PC-3 (cell line): ENCODE measurements at regions of chr7 and their contacts with region 1.

Region 1: GRCh38 chr7:155298834-155299534 is 1.3 kb downstream of the INSIG1 start:
- DNase-seq: peak; percentile 90
- ATAC-seq: peak; percentile 77
- H3K4me3 ChIP-seq: peak overlapping the region; percentile 72
- H3K27ac ChIP-seq: peak overlapping the region; percentile 67
- H3K4me1 ChIP-seq: peaks cover 31% of the 10 kb centered on the region
- H3K27me3 ChIP-seq: no peaks in the 10 kb centered on the region
- CTCF ChIP-seq: no peak

Region 2: GRCh38 chr7:155003376-155004214 is 295.4 kb before region 1 on chr7:
- CTCF ChIA-PET with region 1: no interaction called
- POLR2A ChIA-PET with region 1: interaction called, 11 read pairs
- intact Hi-C with region 1: loop called (anchors 2 kb)
- DNase-seq: peak; percentile 70
- ATAC-seq: peak; percentile 65
- H3K4me3 ChIP-seq: peak overlapping the region; percentile 86
- H3K27ac ChIP-seq: peak overlapping the region; percentile 65
- H3K4me1 ChIP-seq: peaks cover 10% of the 10 kb centered on the region
- H3K27me3 ChIP-seq: no peaks in the 10 kb centered on the region
- CTCF ChIP-seq: no peak

Region 3: GRCh38 chr7:155190688-155191087 is 108.3 kb before region 1 on chr7:
- CTCF ChIA-PET with region 1: no interaction called
- POLR2A ChIA-PET with region 1: no interaction called
- intact Hi-C with region 1: loop called (anchors 1 kb)
- DNase-seq: peak; percentile 39
- ATAC-seq: peak; percentile 57
- H3K4me3 ChIP-seq: peak overlapping the region; percentile 12; the same call in 1 of the 2 replicates
- H3K27ac ChIP-seq: no peak overlapping the region
- H3K4me1 ChIP-seq: peaks cover 18% of the 10 kb centered on the region
- H3K27me3 ChIP-seq: no peaks in the 10 kb centered on the region
- CTCF ChIP-seq: peak; percentile 84

Region 4: GRCh38 chr7:155205368-155206317 is 93.3 kb before region 1 on chr7:
- CTCF ChIA-PET with region 1: no interaction called
- POLR2A ChIA-PET with region 1: no interaction called
- intact Hi-C with region 1: loop called (anchors 1 kb)
- DNase-seq: peak; percentile 94
- ATAC-seq: peak; percentile 87
- H3K4me3 ChIP-seq: peak overlapping the region; percentile 62
- H3K27ac ChIP-seq: peak overlapping the region; percentile 97
- H3K4me1 ChIP-seq: peaks cover 42% of the 10 kb centered on the region
- H3K27me3 ChIP-seq: no peaks in the 10 kb centered on the region
- CTCF ChIP-seq: no peak

Region 5: DNA sequence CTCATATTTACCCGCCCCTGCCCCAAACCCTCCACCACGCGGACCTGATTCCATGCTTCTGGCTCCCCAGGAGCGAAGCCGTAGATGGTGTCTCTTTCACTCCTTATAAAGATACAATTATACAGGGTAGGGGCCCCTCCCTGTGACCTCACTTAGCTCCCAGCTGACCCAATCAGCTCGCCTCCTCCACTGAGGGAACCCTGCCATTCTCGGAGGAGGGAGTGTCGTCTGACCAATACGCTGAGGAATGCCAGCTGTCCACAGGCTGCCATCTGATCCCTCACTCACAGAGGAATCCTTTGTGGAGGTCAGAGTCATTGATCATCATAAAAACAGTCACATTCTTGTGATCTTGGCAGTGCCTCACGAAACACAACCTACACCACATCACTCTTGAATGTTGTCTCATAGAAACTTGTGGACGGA is 68.8 kb before region 1 on chr7:
- CTCF ChIA-PET with region 1: no interaction called
- POLR2A ChIA-PET with region 1: interaction called, 3 read pairs
- intact Hi-C with region 1: loop called (anchors 1 kb)
- DNase-seq: peak; percentile 98
- ATAC-seq: peak; percentile 99
- H3K4me3 ChIP-seq: no peak overlapping the region
- H3K27ac ChIP-seq: peak overlapping the region; percentile 83
- H3K4me1 ChIP-seq: peaks cover 34% of the 10 kb centered on the region
- H3K27me3 ChIP-seq: no peaks in the 10 kb centered on the region
- CTCF ChIP-seq: no peak

Region 6: GRCh38 chr7:155344600-155345433 is 45.8 kb after region 1 on chr7:
- CTCF ChIA-PET with region 1: no interaction called
- POLR2A ChIA-PET with region 1: no interaction called
- intact Hi-C with region 1: loop called (anchors 2 kb)
- DNase-seq: peak; percentile 72
- ATAC-seq: peak; percentile 95
- H3K4me3 ChIP-seq: peak overlapping the region; percentile 64
- H3K27ac ChIP-seq: no peak overlapping the region
- H3K4me1 ChIP-seq: no peaks in the 10 kb centered on the region; the same call in 1 of the 2 replicates
- H3K27me3 ChIP-seq: peaks cover 12% of the 10 kb centered on the region; the same call in 1 of the 2 replicates
- CTCF ChIP-seq: peak; percentile 73

Region 7: DNA sequence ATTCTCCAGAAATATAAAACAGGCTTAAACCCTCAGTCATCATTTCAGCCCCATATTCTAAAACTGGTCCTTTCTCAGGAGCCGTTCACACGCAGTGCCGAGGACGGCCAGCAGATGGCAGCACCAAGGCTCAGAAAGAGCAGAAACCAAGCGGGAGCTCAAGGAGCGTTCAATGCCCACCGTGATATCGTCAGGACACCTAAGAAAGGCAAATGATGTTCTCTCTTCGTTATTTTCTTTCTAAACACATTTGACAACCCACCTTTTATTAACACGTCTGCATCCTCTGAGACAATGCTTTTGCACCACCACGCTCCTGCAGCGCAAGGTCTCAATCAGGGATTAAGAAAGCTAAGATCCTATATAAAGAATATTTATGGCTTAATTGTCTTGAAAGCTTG is 299.8 kb after region 1 on chr7:
- CTCF ChIA-PET with region 1: no interaction called
- POLR2A ChIA-PET with region 1: no interaction called
- intact Hi-C with region 1: no loop called
- DNase-seq: peak; percentile 87
- ATAC-seq: peak; percentile 74
- H3K4me3 ChIP-seq: no peak overlapping the region
- H3K27ac ChIP-seq: no peak overlapping the region
- H3K4me1 ChIP-seq: no peaks in the 10 kb centered on the region
- H3K27me3 ChIP-seq: peaks cover 39% of the 10 kb centered on the region
- CTCF ChIP-seq: peak; percentile 95